ENCODE measurements at regions of chr16 and their contacts with region 1.

Region 1: DNA sequence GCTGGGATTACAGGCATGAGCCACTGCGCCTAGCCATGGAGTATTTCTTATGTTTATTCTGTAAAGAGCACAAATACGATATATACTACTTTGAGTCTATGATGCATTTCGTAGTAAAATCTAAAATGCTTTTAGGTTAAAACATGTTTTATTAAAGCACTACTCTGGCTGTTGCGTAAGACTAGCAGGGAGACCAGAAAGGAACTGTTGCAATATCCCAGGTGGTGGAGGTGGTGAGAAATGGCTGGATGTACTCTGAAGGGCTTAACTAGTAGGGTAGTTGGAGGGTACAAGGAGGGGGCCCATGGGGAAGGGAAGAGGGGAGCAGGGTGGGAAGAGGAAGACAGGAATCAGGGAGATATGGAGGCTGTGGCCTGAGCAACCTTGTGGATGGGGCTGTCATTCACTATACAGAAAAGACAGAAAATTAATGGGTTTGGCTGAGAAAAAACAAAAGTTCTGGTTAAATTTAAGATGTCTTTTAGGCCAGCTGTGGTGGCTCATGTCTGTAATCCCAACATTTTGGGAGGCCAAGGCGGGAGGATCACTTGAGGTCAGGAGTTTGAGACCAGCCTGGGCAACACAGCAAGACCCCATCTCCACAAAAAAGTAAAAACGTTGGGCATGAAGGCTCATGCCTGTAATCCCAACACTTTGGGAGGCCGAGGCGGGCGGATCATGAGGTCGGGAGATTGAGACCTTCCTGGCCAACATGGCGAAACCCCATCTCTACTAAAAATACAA is 35.8 kb downstream of the ST3GAL2 start:
- DNase-seq: peak in 2 of 3 donors; percentile 42 to 49
- H3K4me3 ChIP-seq: no peak overlapping the region
- H3K4me3 Mint-ChIP-seq: peak overlapping the region; percentile 34 to 53
- H3K27ac ChIP-seq: no peak overlapping the region
- H3K27ac Mint-ChIP-seq: peak overlapping the region; percentile 87 to 96 (median 92)
- H3K4me1 ChIP-seq: peaks cover 32 to 39% of the 10 kb centered on the region in 2 donors
- H3K4me1 Mint-ChIP-seq: peaks cover 45% of the 10 kb centered on the region
- H3K27me3 ChIP-seq: no peaks in the 10 kb centered on the region
- H3K27me3 Mint-ChIP-seq: peaks cover 2 to 5% (median 5%) of the 10 kb centered on the region in 3 donors
- CTCF ChIP-seq: no peak

Region 2: GRCh38 chr16:69709456-69710084 is 693.5 kb before region 1 on chr16:
- intact Hi-C with region 1: no loop called
- DNase-seq: peak; percentile 39 to 67 (median 54)
- H3K4me3 ChIP-seq: no peak overlapping the region
- H3K4me3 Mint-ChIP-seq: no peak overlapping the region
- H3K27ac ChIP-seq: no peak overlapping the region
- H3K27ac Mint-ChIP-seq: no peak overlapping the region
- H3K4me1 ChIP-seq: no peaks in the 10 kb centered on the region
- H3K4me1 Mint-ChIP-seq: no peaks in the 10 kb centered on the region
- H3K27me3 ChIP-seq: no peaks in the 10 kb centered on the region
- H3K27me3 Mint-ChIP-seq: no peaks in the 10 kb centered on the region
- CTCF ChIP-seq: peak; percentile 80

Region 3: DNA sequence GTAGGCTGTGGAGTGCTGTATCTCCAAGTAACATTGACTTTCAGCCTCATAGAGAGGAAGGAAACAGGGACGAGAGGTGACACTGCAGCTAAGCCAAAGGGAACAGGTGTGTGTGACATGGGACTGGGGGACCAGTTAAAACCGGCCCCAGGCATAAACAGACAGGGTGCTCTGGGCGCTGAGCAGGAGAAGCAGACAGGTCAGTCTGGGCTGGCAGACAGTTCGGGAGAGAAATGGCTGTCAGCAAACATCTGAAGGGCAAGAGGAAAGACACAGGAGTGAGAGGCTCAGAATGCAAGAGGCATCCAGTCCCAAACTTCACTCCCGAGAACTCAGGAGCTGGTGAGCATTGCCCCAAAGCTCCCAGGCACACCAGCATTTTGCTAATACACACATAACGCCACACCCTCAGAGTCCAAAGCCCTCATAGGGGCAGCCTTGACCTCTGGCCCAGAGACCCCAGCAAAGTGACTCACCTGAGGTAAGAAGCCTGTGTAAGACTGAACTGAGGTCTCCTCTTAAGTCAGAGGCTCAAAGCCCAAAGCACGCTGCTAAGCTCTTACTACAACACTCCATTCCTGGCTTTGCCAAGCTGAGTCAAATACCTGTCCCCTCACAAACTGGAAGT is 19.3 kb after region 1 on chr16:
- intact Hi-C with region 1: loop called in 1 of 2 experiments (anchors 2 kb)
- DNase-seq: no peak
- H3K4me3 ChIP-seq: peak overlapping the region in 1 of 3 experiments; percentile 61
- H3K4me3 Mint-ChIP-seq: no peak overlapping the region
- H3K27ac ChIP-seq: peak overlapping the region in 1 of 2 donors; percentile 82
- H3K27ac Mint-ChIP-seq: peak overlapping the region; percentile 93 to 99 (median 98)
- H3K4me1 ChIP-seq: peaks cover 53 to 79% of the 10 kb centered on the region in 2 donors
- H3K4me1 Mint-ChIP-seq: peaks cover 65% of the 10 kb centered on the region
- H3K27me3 ChIP-seq: no peaks in the 10 kb centered on the region
- H3K27me3 Mint-ChIP-seq: peaks cover 0 to 7% (median 0%) of the 10 kb centered on the region in 3 donors
- CTCF ChIP-seq: no peak

Measured in CD14-positive monocyte (primary cell).